ENCODE measurements at regions of chr6 and their contacts with region 1.

Region 1: GRCh38 chr6:89997456-89998445 is 103.5 kb downstream of the GJA10 start:
- DNase-seq: no peak
- ATAC-seq: no peak
- H3K4me3 Mint-ChIP-seq: no peak overlapping the region
- H3K27ac Mint-ChIP-seq: peak overlapping the region; percentile 32
- H3K4me1 Mint-ChIP-seq: peaks cover 59% of the 10 kb centered on the region
- H3K27me3 Mint-ChIP-seq: no peaks in the 10 kb centered on the region
- CTCF ChIP-seq: no peak

Region 2: GRCh38 chr6:89985751-89986493 is 11.8 kb before region 1 on chr6:
- CTCF ChIA-PET with region 1: interaction called, 15 read pairs
- POLR2A ChIA-PET with region 1: interaction called, 7 read pairs
- intact Hi-C with region 1: no loop called
- DNase-seq: no peak
- ATAC-seq: no peak
- H3K4me3 Mint-ChIP-seq: no peak overlapping the region
- H3K27ac Mint-ChIP-seq: peak overlapping the region; percentile 74
- H3K4me1 Mint-ChIP-seq: peaks cover 82% of the 10 kb centered on the region
- H3K27me3 Mint-ChIP-seq: no peaks in the 10 kb centered on the region
- CTCF ChIP-seq: no peak

Region 3: DNA sequence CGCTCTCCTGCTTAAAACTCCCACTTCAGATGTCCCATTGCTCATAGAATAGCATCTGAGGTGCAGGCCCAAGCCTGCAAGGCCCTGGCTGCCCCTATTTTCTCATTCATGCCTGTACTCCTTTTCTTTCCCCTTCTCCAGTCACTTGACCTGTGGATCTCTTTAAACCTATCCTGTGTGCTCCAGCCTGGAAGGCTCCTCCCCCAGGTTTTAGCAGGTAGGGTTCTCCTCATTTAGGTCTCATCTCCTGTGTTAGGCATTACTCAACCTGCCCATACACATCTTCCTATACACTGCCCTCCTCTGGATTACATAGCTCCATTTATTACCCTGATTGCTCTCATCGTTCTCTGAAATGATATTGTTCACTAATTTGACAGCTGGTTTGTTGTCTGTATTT is 113.6 kb after region 1 on chr6:
- CTCF ChIA-PET with region 1: no interaction called
- POLR2A ChIA-PET with region 1: no interaction called
- intact Hi-C with region 1: no loop called
- DNase-seq: peak; percentile 31
- ATAC-seq: peak; percentile 25
- H3K4me3 Mint-ChIP-seq: peak overlapping the region; percentile 28
- H3K27ac Mint-ChIP-seq: peak overlapping the region; percentile 88
- H3K4me1 Mint-ChIP-seq: peaks cover 75% of the 10 kb centered on the region
- H3K27me3 Mint-ChIP-seq: no peaks in the 10 kb centered on the region
- CTCF ChIP-seq: no peak